Heart left ventricle (tissue), 16 donors: ENCODE measurements at regions of chr6 and their contacts with region 1.

Region 1: DNA sequence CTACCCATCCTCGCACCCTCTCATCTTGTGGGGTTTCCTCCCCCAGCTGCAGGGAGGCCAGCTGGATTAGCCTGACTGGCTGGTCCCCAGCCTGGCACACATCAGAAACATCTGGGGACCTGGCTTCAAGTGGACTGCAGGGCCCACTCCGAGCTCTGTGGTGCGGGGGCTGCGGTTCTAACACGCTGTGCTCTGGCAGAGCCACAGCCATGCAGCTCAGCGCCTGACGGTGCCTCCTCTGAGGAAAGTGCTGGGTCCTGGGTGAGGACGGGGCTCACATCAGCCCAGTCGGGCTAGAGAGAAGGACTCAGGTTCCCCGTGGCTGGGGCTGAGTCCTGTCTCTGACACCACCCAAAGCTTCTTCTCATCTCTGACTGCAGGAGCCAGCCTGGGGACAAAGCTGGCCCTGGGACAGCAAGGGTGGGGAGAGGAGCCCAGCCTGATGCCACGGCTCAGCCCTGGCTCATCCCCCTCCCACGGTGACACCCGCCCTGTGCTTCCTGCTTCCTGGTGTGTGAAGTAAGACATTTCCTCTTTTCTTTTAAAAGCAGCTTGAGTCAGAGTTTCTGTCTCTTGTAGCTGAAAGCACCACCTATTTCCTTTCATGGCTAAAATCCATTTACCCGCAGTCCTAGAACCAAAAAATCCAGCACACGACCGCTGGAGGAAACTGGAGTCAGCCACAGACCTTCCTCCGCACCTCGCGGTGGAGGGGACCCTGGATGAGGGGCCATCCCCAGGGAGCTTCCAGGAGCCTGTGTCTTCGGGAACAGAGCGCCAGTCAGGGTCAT is 127.4 kb upstream of the AFDN start:
- DNase-seq: peak; percentile 81 to 90 (median 88)
- ATAC-seq: peak; percentile 80 to 98 (median 96)
- H3K4me3 ChIP-seq: peak overlapping the region in 7 of 12 donors; percentile 6 to 39 (median 24)
- H3K27ac ChIP-seq: peak overlapping the region; percentile 48 to 96 (median 82)
- H3K4me1 ChIP-seq: peaks cover 0 to 21% (median 17%) of the 10 kb centered on the region in 12 donors
- H3K27me3 ChIP-seq: no peaks in the 10 kb centered on the region
- CTCF ChIP-seq: no peak
- POLR2A ChIP-seq: no peak

Region 2: GRCh38 chr6:167796192-167796996 is 97.1 kb after region 1 on chr6:
- intact Hi-C with region 1: loop called in 1 of 10 experiments (anchors 10 kb)
- DNase-seq: peak; percentile 43 to 81 (median 77)
- ATAC-seq: peak; percentile 84 to 91 (median 88)
- H3K4me3 ChIP-seq: peak overlapping the region in 11 of 12 donors; percentile 19 to 57 (median 49)
- H3K27ac ChIP-seq: peak overlapping the region in 2 of 12 donors; percentile 11 to 18
- H3K4me1 ChIP-seq: peaks cover 0 to 23% (median 9%) of the 10 kb centered on the region in 12 donors
- H3K27me3 ChIP-seq: peaks cover 0 to 27% (median 0%) of the 10 kb centered on the region in 9 donors
- CTCF ChIP-seq: peak in 2 of 12 donors; percentile 2 to 12
- POLR2A ChIP-seq: no peak

Region 3: GRCh38 chr6:167881327-167881726 is 182.0 kb after region 1 on chr6:
- intact Hi-C with region 1: no loop called
- DNase-seq: no peak
- ATAC-seq: no peak
- H3K4me3 ChIP-seq: no peak overlapping the region
- H3K27ac ChIP-seq: no peak overlapping the region
- H3K4me1 ChIP-seq: peaks cover 0 to 16% (median 1%) of the 10 kb centered on the region in 12 donors
- H3K27me3 ChIP-seq: no peaks in the 10 kb centered on the region
- CTCF ChIP-seq: no peak
- POLR2A ChIP-seq: no peak

Region 4: GRCh38 chr6:167932468-167933276 is 233.3 kb after region 1 on chr6:
- intact Hi-C with region 1: no loop called
- DNase-seq: no peak
- ATAC-seq: no peak
- H3K4me3 ChIP-seq: no peak overlapping the region
- H3K27ac ChIP-seq: peak overlapping the region in 8 of 12 donors; percentile 61 to 82 (median 78)
- H3K4me1 ChIP-seq: peaks cover 0 to 27% (median 15%) of the 10 kb centered on the region in 12 donors
- H3K27me3 ChIP-seq: no peaks in the 10 kb centered on the region
- CTCF ChIP-seq: no peak
- POLR2A ChIP-seq: no peak